ENCODE measurements at regions of chr15 and their contacts with region 1.

Region 1: GRCh38 chr15:88904624-88905327 is 8.4 kb downstream of the MFGE8 start:
- DNase-seq: peak; percentile 87
- ATAC-seq: peak; percentile 92
- H3K4me3 ChIP-seq: no peak overlapping the region
- H3K27ac ChIP-seq: no peak overlapping the region
- H3K4me1 ChIP-seq: peaks cover 14% of the 10 kb centered on the region; the same call in 1 of the 2 replicates
- H3K27me3 ChIP-seq: no peaks in the 10 kb centered on the region
- CTCF ChIP-seq: peak; percentile 92

Region 2: DNA sequence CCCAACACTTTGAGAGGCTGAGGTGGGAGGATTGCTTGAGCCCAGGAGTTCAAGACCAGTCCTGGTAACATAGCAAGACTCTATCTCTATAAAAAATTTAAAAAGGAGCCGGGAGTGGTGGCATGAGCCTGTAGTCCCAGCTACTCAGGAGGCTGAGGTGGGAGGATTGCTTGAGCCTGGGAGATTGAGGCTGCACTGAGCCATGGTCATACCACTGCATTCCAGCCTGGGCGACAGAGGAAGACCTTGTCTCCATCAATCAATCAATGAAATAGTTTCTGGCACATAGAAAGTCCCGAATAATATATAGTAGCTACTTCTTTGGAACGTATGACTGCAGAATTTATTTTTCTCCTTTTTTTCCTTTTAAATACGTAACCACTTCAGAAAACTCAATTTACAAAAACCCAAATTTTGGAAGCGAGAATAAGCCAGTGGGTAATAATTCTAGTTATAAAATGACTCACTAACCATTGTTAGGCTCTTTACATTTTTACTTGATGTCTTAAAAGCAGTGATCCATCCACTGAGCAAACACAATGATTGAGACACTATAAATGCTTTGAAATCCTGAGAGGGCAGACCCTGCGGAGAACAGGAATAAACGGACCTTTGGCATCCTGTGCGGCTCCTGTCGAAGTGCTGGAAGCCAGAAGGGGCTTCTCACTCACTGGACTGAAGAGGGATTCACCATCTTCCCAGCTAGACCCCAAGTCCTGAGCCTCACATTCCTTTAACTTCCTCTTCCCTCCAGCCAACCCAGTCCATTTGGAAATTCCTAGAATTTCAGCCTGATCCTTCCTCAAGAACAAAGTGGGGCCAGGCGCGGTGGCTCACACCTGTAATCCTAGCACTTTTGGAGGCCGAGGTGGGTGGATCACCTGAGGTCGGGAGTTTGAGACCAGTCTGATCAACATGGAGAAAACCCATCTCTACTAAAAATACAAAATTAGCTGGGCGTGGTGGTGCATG is 76.8 kb after region 1 on chr15:
- CTCF ChIA-PET with region 1: no interaction called
- POLR2A ChIA-PET with region 1: no interaction called
- intact Hi-C with region 1: loop called (anchors 2 kb)
- DNase-seq: peak; percentile 90
- ATAC-seq: peak; percentile 87
- H3K4me3 ChIP-seq: no peak overlapping the region; the same call in 1 of the 2 replicates
- H3K27ac ChIP-seq: peak overlapping the region; percentile 85
- H3K4me1 ChIP-seq: peaks cover 23% of the 10 kb centered on the region
- H3K27me3 ChIP-seq: no peaks in the 10 kb centered on the region
- CTCF ChIP-seq: no peak

Region 3: DNA sequence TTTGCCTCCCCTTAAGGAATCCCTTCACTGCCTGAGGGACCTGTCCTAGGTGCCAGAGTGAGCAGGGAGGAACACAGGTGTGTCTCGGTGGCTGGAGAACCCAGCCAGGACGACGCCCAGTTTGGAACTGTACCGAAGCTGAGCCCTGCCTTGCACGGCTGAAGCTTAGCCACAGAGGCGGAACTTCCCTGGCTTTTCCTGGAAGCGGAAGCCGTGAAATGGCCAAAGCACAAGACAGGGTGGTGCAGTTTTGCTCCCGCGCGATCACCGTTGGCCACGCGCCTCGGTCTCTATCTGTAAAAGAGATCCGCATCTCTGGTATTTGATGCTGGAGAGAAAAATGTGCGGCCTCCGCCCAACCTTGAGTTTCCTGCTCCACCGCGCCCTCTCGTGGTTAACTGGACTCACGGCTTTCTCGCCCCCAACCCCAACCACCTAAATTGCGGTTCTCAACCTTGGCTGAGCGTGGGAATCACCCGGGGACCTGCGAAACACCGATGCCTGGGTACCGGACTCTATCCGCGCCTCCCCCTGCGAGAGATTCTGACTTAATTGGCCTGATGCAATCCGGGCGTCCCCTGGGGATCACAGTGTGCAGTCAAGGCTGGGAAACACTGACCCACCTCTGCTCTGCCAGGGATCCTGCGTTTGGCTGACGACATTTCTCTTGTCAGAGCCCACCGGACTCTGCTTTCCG is 112.7 kb after region 1 on chr15:
- CTCF ChIA-PET with region 1: interaction called, 12 read pairs
- POLR2A ChIA-PET with region 1: no interaction called
- intact Hi-C with region 1: loop called (anchors 1 kb)
- DNase-seq: peak; percentile 86
- ATAC-seq: peak; percentile 75
- H3K4me3 ChIP-seq: peak overlapping the region; percentile 50
- H3K27ac ChIP-seq: peak overlapping the region; percentile 67
- H3K4me1 ChIP-seq: peaks cover 18% of the 10 kb centered on the region
- H3K27me3 ChIP-seq: no peaks in the 10 kb centered on the region
- CTCF ChIP-seq: peak; percentile 87

Region 4: GRCh38 chr15:89177633-89178306 is 273.0 kb after region 1 on chr15:
- CTCF ChIA-PET with region 1: no interaction called
- POLR2A ChIA-PET with region 1: no interaction called
- intact Hi-C with region 1: loop called (anchors 10 kb)
- DNase-seq: peak; percentile 81
- ATAC-seq: peak; percentile 65
- H3K4me3 ChIP-seq: no peak overlapping the region
- H3K27ac ChIP-seq: no peak overlapping the region
- H3K4me1 ChIP-seq: no peaks in the 10 kb centered on the region
- H3K27me3 ChIP-seq: no peaks in the 10 kb centered on the region
- CTCF ChIP-seq: peak; percentile 90

Measured in PC-3 (cell line).